WTC11 (cell line): ENCODE measurements at regions of chr7 and their contacts with region 1.

Region 1: GRCh38 chr7:131109757-131110293 is 217.9 kb upstream of the MKLN1 start:
- DNase-seq: peak; percentile 76
- ATAC-seq: peak; percentile 13
- H3K4me3 Mint-ChIP-seq: peak overlapping the region; percentile 95
- H3K27ac Mint-ChIP-seq: peak overlapping the region; percentile 96
- H3K4me1 Mint-ChIP-seq: peaks cover 42% of the 10 kb centered on the region
- H3K27me3 Mint-ChIP-seq: peaks cover 12% of the 10 kb centered on the region
- CTCF ChIP-seq: no peak

Region 2: GRCh38 chr7:131031099-131031868 is 78.5 kb before region 1 on chr7:
- CTCF ChIA-PET with region 1: no interaction called
- POLR2A ChIA-PET with region 1: no interaction called
- DNase-seq: no peak
- ATAC-seq: no peak
- H3K4me3 Mint-ChIP-seq: no peak overlapping the region
- H3K27ac Mint-ChIP-seq: no peak overlapping the region
- H3K4me1 Mint-ChIP-seq: peaks cover 11% of the 10 kb centered on the region
- H3K27me3 Mint-ChIP-seq: no peaks in the 10 kb centered on the region
- CTCF ChIP-seq: no peak

Region 3: GRCh38 chr7:131190146-131190545 is 80.3 kb after region 1 on chr7:
- CTCF ChIA-PET with region 1: no interaction called
- POLR2A ChIA-PET with region 1: interaction called, 10 read pairs
- DNase-seq: peak; percentile 38
- ATAC-seq: peak; percentile 96
- H3K4me3 Mint-ChIP-seq: peak overlapping the region; percentile 32
- H3K27ac Mint-ChIP-seq: peak overlapping the region; percentile 98
- H3K4me1 Mint-ChIP-seq: peaks cover 58% of the 10 kb centered on the region
- H3K27me3 Mint-ChIP-seq: no peaks in the 10 kb centered on the region
- CTCF ChIP-seq: no peak

Region 4: DNA sequence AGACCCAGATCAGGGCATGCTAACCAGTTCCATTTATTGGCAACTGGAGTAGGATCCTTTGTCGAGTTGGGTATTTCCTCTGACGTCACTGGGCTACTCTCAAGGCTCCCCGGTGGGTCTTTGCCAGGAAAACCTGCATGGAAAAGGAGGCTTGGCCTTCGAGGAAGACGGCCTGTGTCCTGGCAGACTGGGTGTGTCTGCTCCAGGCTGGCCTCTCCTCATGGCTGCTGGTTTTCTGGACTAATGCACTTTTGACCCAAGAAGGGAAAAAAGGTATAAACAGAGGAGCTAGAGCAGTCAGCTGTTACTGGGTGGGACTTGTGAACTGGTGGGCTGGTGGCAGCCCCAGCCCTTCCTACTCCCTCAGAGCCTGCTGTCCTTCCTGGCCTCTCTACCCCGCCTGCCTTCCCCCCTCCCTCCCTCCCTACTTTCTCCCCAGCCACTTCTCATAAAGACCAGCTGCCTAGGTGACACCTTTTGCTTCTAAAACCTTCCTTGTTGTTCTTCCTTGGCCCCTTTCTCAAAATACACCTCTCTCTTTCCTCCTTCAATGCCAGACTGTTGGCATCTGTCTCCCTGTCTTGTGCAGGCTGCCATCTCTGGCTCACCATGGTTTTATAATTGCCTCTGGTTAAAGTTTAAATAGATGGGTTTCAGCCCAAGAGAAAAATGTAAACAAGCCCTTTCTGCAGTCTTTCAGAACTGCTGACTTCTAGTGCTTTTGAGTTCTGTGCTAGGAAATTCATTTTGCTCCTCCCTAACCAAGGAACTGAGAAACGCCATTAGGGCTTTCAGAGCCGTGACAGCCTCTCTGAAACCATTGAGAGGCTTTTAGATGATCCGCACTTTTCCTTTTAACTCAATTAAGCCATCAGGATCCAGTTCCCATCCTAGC is 116.0 kb after region 1 on chr7:
- CTCF ChIA-PET with region 1: no interaction called
- POLR2A ChIA-PET with region 1: no interaction called
- DNase-seq: no peak
- ATAC-seq: no peak
- H3K4me3 Mint-ChIP-seq: no peak overlapping the region
- H3K27ac Mint-ChIP-seq: no peak overlapping the region
- H3K4me1 Mint-ChIP-seq: peaks cover 13% of the 10 kb centered on the region
- H3K27me3 Mint-ChIP-seq: no peaks in the 10 kb centered on the region
- CTCF ChIP-seq: no peak